ENCODE measurements at regions of chr10 and their contacts with region 1.

Region 1: DNA sequence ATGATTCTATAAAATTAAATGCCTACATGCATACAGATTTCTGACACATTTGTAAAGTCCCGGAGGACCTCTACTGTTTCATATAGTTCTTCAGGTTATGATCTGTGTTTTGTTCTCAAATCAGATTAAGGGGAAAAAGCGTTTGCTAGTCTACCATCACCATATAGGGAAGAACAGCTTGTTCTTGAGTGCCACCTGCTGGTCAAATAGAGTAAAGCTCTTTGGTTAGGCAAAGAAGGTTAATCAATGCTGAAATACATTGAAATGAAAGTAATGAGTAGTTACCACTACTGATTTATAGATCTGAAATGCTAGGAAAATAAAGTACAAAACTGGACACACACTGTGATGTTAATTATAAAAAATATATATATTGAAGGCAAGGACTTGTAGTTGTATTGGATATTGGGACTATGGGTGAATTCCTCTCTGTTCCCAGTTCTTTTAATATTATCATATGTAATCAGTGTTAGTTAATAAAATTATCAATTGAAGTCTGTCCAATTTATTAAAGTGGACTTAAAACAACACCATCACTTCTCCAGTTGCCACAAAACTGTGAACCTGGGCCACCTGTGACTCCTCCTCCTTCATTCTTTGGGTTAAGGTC is 72.6 kb upstream of the PDLIM1 start:
- DNase-seq: no peak
- H3K4me3 ChIP-seq: no peak overlapping the region
- H3K27ac ChIP-seq: no peak overlapping the region
- H3K4me1 ChIP-seq: peaks cover 0 to 3% (median 0%) of the 10 kb centered on the region in 4 experiments; a peak in 2 of 7 replicates
- H3K27me3 ChIP-seq: no peaks in the 10 kb centered on the region
- CTCF ChIP-seq: peak in 2 of 3 experiments; percentile 73 to 82; a peak in 3 of 4 replicates
- EP300 ChIP-seq: no peak
- POLR2A ChIP-seq: no peak
- RAD21 ChIP-seq: peak; percentile 95 to 96

Region 2: GRCh38 chr10:95133016-95133752 is 230.2 kb before region 1 on chr10:
- CTCF ChIA-PET with region 1: interaction called, 12 read pairs
- POLR2A ChIA-PET with region 1: no interaction called
- DNase-seq: peak; percentile 67 to 95
- H3K4me3 ChIP-seq: no peak overlapping the region
- H3K27ac ChIP-seq: no peak overlapping the region
- H3K4me1 ChIP-seq: no peaks in the 10 kb centered on the region
- H3K27me3 ChIP-seq: no peaks in the 10 kb centered on the region
- CTCF ChIP-seq: peak; percentile 59 to 98 (median 83)
- EP300 ChIP-seq: no peak
- POLR2A ChIP-seq: no peak
- RAD21 ChIP-seq: peak; percentile 98

Region 3: DNA sequence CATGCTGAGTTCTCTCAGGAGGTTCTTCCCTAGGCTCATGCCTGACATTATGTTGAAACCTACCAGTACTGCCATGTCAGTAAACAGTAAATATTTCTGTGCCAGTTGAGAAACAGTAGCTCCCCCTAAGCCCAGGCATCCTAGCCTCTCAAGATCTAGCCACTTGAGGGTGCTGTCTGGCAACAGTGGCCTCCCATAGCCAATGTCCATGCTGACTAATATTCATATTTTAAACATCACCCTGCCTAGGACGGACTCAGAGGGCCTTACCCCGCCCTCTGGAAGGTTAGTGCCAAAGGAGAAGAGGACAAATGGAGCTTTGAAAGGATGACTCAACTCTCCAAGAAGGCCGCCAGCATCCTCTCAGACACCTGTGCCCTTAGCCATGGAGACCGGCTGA is 161.7 kb before region 1 on chr10:
- CTCF ChIA-PET with region 1: interaction called, 29 read pairs
- POLR2A ChIA-PET with region 1: no interaction called
- DNase-seq: no peak
- H3K4me3 ChIP-seq: no peak overlapping the region
- H3K27ac ChIP-seq: no peak overlapping the region
- H3K4me1 ChIP-seq: peaks cover 0 to 2% (median 0%) of the 10 kb centered on the region in 4 experiments; a peak in 1 of 7 replicates
- H3K27me3 ChIP-seq: no peaks in the 10 kb centered on the region
- CTCF ChIP-seq: peak; percentile 46 to 68 (median 57)
- EP300 ChIP-seq: no peak
- POLR2A ChIP-seq: no peak
- RAD21 ChIP-seq: peak; percentile 67 to 73

Region 4: DNA sequence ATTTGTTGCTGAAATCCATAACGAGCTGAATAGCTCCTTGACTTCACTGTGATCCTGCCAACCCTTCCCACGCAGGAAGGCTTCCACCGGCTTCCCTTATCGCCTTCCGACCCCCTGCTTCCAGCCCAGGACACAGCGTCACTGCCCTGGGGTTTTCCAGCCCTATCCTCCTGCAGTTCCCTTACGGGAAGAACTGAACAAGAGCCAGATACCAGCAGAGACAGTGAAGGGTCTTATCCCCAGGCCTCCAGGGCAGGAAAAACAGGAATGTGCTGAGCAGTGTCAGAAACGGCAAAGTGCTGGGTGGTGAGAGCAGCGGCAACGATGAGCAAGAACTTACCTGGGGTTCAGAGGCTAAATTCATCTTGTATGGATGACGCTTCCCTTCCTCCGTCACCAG is 95.0 kb before region 1 on chr10:
- CTCF ChIA-PET with region 1: interaction called, 17 read pairs
- POLR2A ChIA-PET with region 1: interaction called, 4 read pairs
- DNase-seq: peak in 1 of 2 experiments; percentile 47
- H3K4me3 ChIP-seq: no peak overlapping the region
- H3K27ac ChIP-seq: no peak overlapping the region
- H3K4me1 ChIP-seq: peaks cover 6 to 23% (median 14%) of the 10 kb centered on the region in 4 experiments
- H3K27me3 ChIP-seq: no peaks in the 10 kb centered on the region
- CTCF ChIP-seq: no peak
- EP300 ChIP-seq: no peak
- POLR2A ChIP-seq: no peak
- RAD21 ChIP-seq: no peak

Region 5: GRCh38 chr10:95350219-95350829 is 13.1 kb before region 1 on chr10:
- CTCF ChIA-PET with region 1: interaction called, 38 read pairs
- POLR2A ChIA-PET with region 1: no interaction called
- DNase-seq: no peak
- H3K4me3 ChIP-seq: no peak overlapping the region
- H3K27ac ChIP-seq: no peak overlapping the region
- H3K4me1 ChIP-seq: peaks cover 0 to 2% (median 0%) of the 10 kb centered on the region in 4 experiments; a peak in 1 of 7 replicates
- H3K27me3 ChIP-seq: no peaks in the 10 kb centered on the region
- CTCF ChIP-seq: no peak
- EP300 ChIP-seq: no peak
- POLR2A ChIP-seq: no peak
- RAD21 ChIP-seq: no peak

Region 6: GRCh38 chr10:95437669-95438068 is 74.3 kb after region 1 on chr10:
- CTCF ChIA-PET with region 1: no interaction called
- POLR2A ChIA-PET with region 1: no interaction called
- DNase-seq: no peak
- H3K4me3 ChIP-seq: no peak overlapping the region
- H3K27ac ChIP-seq: no peak overlapping the region
- H3K4me1 ChIP-seq: no peaks in the 10 kb centered on the region
- H3K27me3 ChIP-seq: no peaks in the 10 kb centered on the region
- CTCF ChIP-seq: no peak
- EP300 ChIP-seq: no peak
- POLR2A ChIP-seq: no peak
- RAD21 ChIP-seq: no peak